Stomach (tissue), 19 donors: ENCODE measurements at regions of chr1 and their contacts with region 1.

Region 1: DNA sequence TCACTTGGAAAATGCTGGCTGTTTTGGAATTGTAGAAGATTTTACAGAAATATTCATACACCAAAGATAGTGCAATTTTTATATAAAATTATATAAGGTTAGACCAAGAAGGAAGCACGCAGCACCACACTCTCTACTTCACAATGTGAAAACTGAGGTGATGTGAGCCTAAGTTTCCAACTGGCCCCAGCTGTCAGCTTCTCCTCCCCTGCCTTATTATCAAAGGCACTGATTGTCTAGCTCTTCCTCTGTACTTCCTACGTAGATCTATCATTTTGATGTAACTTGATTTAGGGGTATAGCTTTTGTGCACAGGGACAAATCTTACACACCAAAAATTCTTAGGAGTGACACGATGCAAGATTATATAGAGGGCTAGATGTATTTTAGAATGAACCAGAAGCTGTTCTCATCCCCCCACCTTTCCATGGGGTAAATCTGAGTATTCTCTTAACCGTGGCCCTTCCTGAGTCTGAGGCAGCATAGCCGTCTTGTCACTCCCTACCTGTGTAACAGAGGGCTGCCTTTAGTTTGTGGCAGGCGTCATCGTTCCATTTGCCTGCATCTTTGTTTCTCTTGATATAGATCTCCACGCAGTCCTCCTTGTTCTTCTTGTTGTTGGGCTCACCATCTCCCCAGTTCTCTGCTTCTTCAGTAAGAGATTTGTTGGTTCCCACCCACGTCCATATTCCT is 3.4 kb downstream of the SELL start:
- DNase-seq: no peak
- H3K4me3 ChIP-seq: peak overlapping the region in 1 of 4 donors; percentile 6
- H3K27ac ChIP-seq: no peak overlapping the region
- H3K4me1 ChIP-seq: peaks cover 0 to 11% (median 9%) of the 10 kb centered on the region in 4 donors
- H3K27me3 ChIP-seq: no peaks in the 10 kb centered on the region
- CTCF ChIP-seq: no peak
- EP300 ChIP-seq: no peak
- POLR2A ChIP-seq: no peak

Region 2: GRCh38 chr1:169106095-169106920 is 601.8 kb before region 1 on chr1 and contains the start of gene ATP1B1:
- intact Hi-C with region 1: no loop called
- DNase-seq: peak; percentile 94 to 97
- H3K4me3 ChIP-seq: peak within 1 kb of the TSS; percentile 75 to 96 (median 79)
- H3K27ac ChIP-seq: peak within 1 kb of the TSS; percentile 94 to 98 (median 96)
- H3K4me1 ChIP-seq: peaks cover 24 to 71% (median 48%) of the 10 kb centered on the region in 4 donors
- H3K27me3 ChIP-seq: no peaks in the 10 kb centered on the region
- CTCF ChIP-seq: peak in 5 of 7 experiments; percentile 48 to 87 (median 70)
- EP300 ChIP-seq: no peak
- POLR2A ChIP-seq: peak in 2 of 4 donors; percentile 86 to 98
- total RNA-seq, gene ATP1B1: 106 to 507 (median 272) TPM

Region 3: DNA sequence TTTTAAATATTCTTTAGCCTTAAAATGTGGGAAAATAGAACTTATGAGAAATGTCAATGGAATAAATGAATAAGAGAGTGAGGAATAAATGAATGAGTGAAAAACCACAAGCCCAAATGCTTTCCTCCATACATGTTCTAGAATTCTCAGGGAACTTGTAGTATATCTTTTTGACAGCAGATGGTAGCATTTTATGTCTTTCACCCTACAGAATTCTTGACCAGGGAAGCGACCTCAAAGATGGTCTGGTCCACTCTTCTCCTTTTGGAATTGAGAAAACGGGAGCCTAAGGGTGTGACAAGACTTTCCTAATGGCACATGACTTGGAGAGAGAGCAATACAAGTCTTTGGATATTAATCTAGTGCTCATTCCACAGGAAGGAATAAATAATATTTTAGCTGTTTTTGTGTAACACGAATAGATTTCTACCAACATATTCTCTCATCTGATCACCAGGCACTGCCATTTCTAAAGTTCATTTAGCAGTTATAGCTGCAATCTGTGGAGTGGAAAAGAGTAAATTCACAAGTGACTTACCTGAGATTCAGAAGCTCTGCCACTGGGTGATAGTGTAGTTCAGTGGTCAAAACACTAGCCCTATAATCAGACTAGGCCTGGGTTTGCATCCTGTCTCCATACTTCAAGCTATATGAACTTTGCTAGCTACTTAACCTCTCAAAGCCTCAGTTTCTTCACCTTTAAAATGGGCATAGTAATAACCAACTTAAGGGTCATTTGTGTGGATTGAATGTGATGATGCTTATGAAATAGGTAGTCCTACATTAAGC is 106.8 kb before region 1 on chr1:
- intact Hi-C with region 1: loop called (anchors 10 kb)
- DNase-seq: peak in 1 of 2 donors; percentile 36
- H3K4me3 ChIP-seq: no peak overlapping the region
- H3K27ac ChIP-seq: no peak overlapping the region
- H3K4me1 ChIP-seq: no peaks in the 10 kb centered on the region
- H3K27me3 ChIP-seq: peaks cover 0 to 8% (median 0%) of the 10 kb centered on the region in 3 donors
- CTCF ChIP-seq: peak in 2 of 7 experiments; percentile 32 to 39
- EP300 ChIP-seq: no peak
- POLR2A ChIP-seq: no peak

Region 4: GRCh38 chr1:169634145-169634544 is 73.9 kb before region 1 on chr1:
- intact Hi-C with region 1: no loop called
- DNase-seq: no peak
- H3K4me3 ChIP-seq: no peak overlapping the region
- H3K27ac ChIP-seq: no peak overlapping the region
- H3K4me1 ChIP-seq: no peaks in the 10 kb centered on the region
- H3K27me3 ChIP-seq: no peaks in the 10 kb centered on the region
- CTCF ChIP-seq: no peak
- EP300 ChIP-seq: no peak
- POLR2A ChIP-seq: no peak

Region 5: DNA sequence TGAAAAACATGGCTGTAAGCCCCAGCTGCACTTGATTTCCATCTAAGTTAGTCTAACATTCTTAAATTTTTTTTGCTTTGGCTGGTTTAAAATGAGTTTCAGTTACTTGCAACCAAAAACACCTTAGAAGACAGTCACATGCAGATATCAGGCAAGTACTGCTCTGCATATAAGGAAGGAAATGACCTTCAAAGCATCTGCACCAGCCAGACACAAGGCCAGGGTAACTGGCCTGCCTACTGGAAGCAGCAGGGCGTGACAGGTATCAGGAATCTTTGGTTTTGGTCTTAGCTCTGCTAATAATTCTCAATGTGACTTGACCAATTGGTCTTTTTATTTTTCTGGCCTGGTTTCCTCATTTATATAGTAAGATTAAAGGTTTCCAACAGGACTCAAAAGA is 152.1 kb after region 1 on chr1:
- intact Hi-C with region 1: no loop called
- DNase-seq: no peak
- H3K4me3 ChIP-seq: no peak overlapping the region
- H3K27ac ChIP-seq: no peak overlapping the region
- H3K4me1 ChIP-seq: no peaks in the 10 kb centered on the region
- H3K27me3 ChIP-seq: no peaks in the 10 kb centered on the region
- CTCF ChIP-seq: no peak
- EP300 ChIP-seq: no peak
- POLR2A ChIP-seq: no peak

Region 6: GRCh38 chr1:170247751-170248521 is 539.9 kb after region 1 on chr1:
- intact Hi-C with region 1: no loop called
- DNase-seq: no peak
- H3K4me3 ChIP-seq: no peak overlapping the region
- H3K27ac ChIP-seq: no peak overlapping the region
- H3K4me1 ChIP-seq: no peaks in the 10 kb centered on the region
- H3K27me3 ChIP-seq: no peaks in the 10 kb centered on the region
- CTCF ChIP-seq: no peak
- EP300 ChIP-seq: no peak
- POLR2A ChIP-seq: no peak